Mammary epithelial cell (primary cell): ENCODE measurements at regions of chr16 and their contacts with region 1.

Region 1: GRCh38 chr16:6643080-6643686 is 689.5 kb upstream of the RBFOX1 start:
- DNase-seq: peak; percentile 41
- H3K4me3 ChIP-seq: no peak overlapping the region
- H3K27ac ChIP-seq: no peak overlapping the region
- H3K4me1 ChIP-seq: no peaks in the 10 kb centered on the region
- H3K27me3 ChIP-seq: no peaks in the 10 kb centered on the region
- CTCF ChIP-seq: peak; percentile 79 to 81

Region 2: GRCh38 chr16:5234295-5235050 is 1408.7 kb before region 1 on chr16:
- CTCF ChIA-PET with region 1: interaction called, 3 read pairs
- dilution Hi-C with region 1: no loop called
- in situ Hi-C with region 1: loop called in 1 of 2 experiments (anchors 10 kb)
- intact Hi-C with region 1: no loop called
- DNase-seq: no peak
- H3K4me3 ChIP-seq: no peak overlapping the region
- H3K27ac ChIP-seq: no peak overlapping the region
- H3K4me1 ChIP-seq: no peaks in the 10 kb centered on the region
- H3K27me3 ChIP-seq: no peaks in the 10 kb centered on the region
- CTCF ChIP-seq: no peak

Region 3: DNA sequence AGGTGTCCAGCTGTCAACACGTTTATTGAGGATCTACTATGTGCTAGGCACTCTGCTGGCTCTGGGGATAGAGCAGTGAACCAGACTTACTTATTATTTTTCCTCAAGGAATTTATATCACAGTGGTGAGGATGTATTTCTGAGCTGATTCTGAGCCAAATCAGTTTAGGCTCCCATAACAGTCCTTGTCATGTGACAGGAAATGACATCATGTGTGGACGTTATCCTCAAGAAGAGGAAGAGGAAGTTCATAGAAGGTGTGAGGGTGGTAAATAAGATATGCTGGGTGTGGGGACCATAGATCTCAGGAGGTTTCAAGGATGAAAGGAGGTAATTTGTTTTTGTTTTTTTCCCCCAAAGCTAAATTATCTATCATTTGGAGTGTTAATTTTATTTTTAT is 672.1 kb before region 1 on chr16:
- CTCF ChIA-PET with region 1: no interaction called
- dilution Hi-C with region 1: no loop called
- in situ Hi-C with region 1: no loop called
- intact Hi-C with region 1: no loop called
- DNase-seq: no peak
- H3K4me3 ChIP-seq: no peak overlapping the region
- H3K27ac ChIP-seq: no peak overlapping the region
- H3K4me1 ChIP-seq: no peaks in the 10 kb centered on the region
- H3K27me3 ChIP-seq: no peaks in the 10 kb centered on the region
- CTCF ChIP-seq: no peak

Region 4: DNA sequence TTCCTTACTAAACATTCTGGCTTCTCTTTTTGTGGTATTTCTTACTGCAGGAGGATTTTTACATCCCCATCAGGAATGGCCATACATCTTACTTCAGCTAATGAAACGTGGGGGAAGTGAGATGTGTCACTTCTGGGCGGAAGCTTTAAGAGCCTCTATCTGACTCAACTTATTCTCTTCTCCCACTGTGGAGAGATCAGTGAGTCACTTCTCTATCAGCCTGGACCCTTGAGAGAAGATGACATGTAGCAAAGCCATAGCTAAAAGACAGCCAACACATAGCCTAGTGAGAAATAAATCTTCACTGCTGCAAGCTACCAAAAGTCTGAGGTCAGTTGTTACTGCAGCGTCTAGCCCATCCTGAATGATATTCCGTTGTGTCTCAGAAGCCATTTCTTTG is 377.2 kb before region 1 on chr16:
- CTCF ChIA-PET with region 1: no interaction called
- dilution Hi-C with region 1: no loop called
- in situ Hi-C with region 1: no loop called
- intact Hi-C with region 1: no loop called
- DNase-seq: no peak
- H3K4me3 ChIP-seq: no peak overlapping the region
- H3K27ac ChIP-seq: no peak overlapping the region
- H3K4me1 ChIP-seq: no peaks in the 10 kb centered on the region
- H3K27me3 ChIP-seq: no peaks in the 10 kb centered on the region
- CTCF ChIP-seq: no peak